Endothelial cell of umbilical vein (primary cell): ENCODE measurements at regions of chr3 and their contacts with region 1.

Region 1: DNA sequence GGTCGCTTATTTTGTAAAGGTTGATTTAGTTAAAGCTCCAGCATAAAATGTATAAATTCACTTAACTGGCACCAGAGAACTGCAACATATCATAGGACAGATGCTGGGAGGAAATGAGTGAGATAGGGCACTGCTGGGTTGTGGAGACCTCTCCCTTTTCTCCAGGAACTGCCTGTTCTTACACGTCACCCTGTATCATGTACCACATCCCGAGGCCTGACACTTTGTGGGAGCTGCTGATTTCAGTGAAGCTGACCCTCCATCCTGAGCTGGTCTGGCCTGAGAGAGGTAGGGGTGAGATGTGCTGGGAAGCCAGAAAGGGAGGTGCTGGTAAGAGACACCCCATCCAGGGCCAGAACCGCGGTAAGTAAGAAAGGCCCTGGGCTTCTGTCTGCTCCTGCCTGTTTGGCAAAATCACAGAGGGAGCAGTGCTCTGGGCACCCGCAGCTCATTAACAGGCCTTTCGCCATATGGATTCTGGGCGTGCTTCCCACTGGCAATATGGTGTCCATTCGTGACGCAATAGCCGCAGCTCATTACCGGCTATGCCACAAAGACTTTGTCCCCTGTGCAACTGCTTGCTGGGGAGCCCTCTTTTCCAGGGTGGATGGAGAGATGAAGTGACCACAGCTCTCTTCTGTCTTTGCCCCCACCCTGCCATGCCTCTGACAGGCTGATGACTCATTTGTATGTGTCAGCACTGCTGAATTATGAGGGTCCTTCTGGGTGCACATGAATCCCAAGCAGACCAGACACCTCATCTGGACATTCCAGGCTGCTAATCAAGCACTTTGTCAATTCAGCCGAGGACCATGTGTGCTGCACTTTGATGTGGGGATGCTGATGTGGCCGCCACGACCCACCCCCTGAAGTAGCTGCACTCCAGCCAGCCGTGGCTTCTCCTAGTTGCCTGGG is 214.1 kb upstream of the FEZF2 start:
- DNase-seq: peak; percentile 72
- H3K4me3 ChIP-seq: no peak overlapping the region
- H3K27ac ChIP-seq: peak overlapping the region; percentile 79
- H3K4me1 ChIP-seq: peaks cover 38% of the 10 kb centered on the region
- H3K27me3 ChIP-seq: no peaks in the 10 kb centered on the region
- CTCF ChIP-seq: no peak
- POLR2A ChIP-seq: peak; percentile 69

Region 2: DNA sequence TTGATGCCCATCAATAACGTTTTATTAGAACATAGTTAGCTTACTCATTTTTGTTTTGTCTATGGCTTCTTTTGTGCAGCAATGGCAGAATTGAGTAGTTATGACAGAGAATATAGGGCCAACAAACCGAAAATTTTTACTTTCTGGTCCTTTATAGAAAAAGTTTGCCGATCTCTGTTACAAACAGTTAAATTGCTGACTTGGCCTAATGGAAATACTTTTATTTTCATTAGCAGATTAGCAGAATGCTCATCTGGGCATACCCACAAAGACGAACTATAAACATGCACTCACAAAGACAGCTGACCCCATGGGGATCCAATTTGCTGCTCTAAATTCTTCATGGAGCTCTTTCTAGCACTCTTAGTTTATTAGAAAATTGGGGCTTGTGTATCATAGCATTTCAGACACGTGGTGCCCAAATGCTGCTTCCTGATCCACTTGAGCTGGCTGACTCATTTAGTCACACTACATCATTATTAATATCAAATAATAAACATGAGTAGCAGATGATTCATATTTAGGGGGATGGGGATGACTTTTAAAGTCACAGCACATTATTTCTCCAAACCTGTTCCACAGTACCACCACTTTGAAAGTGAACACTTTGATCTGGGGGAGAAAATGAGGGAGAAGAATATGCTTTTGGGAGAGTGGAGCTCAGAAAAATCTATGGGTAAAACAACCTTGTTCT is 13.9 kb after region 1 on chr3:
- CTCF ChIA-PET with region 1: interaction called, 18 read pairs
- POLR2A ChIA-PET with region 1: interaction called, 5 read pairs
- dilution Hi-C with region 1: no loop called
- intact Hi-C with region 1: loop called (anchors 1 kb)
- DNase-seq: peak; percentile 88
- H3K4me3 ChIP-seq: no peak overlapping the region
- H3K27ac ChIP-seq: peak overlapping the region; percentile 98
- H3K4me1 ChIP-seq: peaks cover 57% of the 10 kb centered on the region
- H3K27me3 ChIP-seq: no peaks in the 10 kb centered on the region
- CTCF ChIP-seq: no peak
- POLR2A ChIP-seq: peak; percentile 31